PC-9 (cell line): ENCODE measurements at regions of chr1 and their contacts with region 1.

Region 1: GRCh38 chr1:40344597-40344996 is 27.5 kb upstream of the COL9A2 start:
- DNase-seq: no peak
- H3K4me3 ChIP-seq: no peak overlapping the region
- H3K27ac ChIP-seq: no peak overlapping the region
- H3K4me1 ChIP-seq: peaks cover 2% of the 10 kb centered on the region; the same call in 1 of the 2 replicates
- H3K27me3 ChIP-seq: no peaks in the 10 kb centered on the region
- CTCF ChIP-seq: no peak

Region 2: GRCh38 chr1:40232444-40232843 is 112.2 kb before region 1 on chr1:
- CTCF ChIA-PET with region 1: interaction called, 10 read pairs
- POLR2A ChIA-PET with region 1: no interaction called
- intact Hi-C with region 1: no loop called
- DNase-seq: no peak
- H3K4me3 ChIP-seq: no peak overlapping the region
- H3K27ac ChIP-seq: no peak overlapping the region
- H3K4me1 ChIP-seq: no peaks in the 10 kb centered on the region
- H3K27me3 ChIP-seq: no peaks in the 10 kb centered on the region
- CTCF ChIP-seq: no peak

Region 3: DNA sequence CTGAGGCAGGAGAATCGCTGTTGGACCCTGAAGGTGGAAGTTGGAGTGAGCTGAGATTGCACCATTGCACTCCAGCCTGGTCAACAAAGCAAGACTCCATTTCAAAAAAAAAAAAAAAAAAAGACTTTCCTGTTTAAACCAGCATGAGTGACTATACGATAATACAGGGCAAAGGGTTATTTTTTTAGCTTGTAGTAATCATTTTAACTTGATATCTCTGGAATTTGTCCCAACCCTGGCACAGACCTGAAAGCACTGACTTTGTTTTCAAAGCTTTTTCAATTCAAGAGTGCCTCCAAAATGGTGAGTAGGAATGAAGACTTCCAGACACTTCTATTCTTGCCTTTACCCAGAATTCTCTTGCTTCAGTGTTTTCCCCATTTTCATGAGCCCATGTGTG is 101.2 kb before region 1 on chr1:
- CTCF ChIA-PET with region 1: no interaction called
- POLR2A ChIA-PET with region 1: no interaction called
- intact Hi-C with region 1: no loop called
- DNase-seq: no peak
- H3K4me3 ChIP-seq: no peak overlapping the region
- H3K27ac ChIP-seq: no peak overlapping the region
- H3K4me1 ChIP-seq: peaks cover 24% of the 10 kb centered on the region
- H3K27me3 ChIP-seq: no peaks in the 10 kb centered on the region
- CTCF ChIP-seq: no peak

Region 4: DNA sequence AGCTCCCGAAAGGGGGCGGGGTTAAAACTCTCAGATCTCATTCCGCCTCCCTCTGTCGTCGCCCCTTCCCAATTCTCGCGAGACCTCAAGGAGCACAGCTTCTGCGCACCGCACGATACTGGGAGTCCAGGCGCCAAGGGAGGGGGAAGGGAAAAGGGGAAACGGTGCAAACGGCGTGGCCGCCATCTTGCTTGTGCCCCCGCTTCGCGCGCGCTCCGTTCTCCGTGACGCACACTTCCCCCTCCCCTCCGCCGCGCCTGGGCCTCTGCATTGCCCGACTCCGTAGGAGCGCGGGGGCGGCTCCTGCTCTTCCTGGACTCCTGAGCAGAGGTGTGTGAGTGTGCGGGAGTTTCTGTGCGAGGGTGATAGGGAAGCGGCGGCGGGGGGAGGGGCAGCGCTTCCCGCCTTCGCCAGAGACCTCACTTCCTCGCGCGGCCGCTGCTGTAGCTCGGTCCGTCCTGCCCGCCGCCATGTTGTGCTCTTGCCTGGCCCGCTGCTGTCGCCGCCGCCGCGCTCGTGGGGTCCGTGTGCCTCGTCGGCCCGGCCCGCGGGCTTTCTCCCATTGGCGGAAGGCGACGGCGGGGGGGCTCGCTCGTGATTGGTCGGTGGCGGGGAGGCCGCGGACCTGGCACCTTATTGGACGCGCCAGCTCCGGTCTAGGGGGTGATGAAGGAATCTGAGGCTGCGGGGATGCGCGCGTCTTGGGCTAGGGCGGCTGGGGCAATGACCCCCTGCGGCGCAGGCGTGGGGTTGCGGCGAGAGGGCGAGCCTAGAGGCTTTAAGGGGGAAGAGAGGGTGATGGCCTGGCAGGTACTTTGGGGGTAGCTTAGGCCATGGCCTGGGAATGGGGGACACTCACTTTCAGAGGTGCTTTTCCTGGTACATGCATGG is 347.2 kb after region 1 on chr1 and contains the start of gene NFYC:
- CTCF ChIA-PET with region 1: no interaction called
- POLR2A ChIA-PET with region 1: no interaction called
- intact Hi-C with region 1: no loop called
- DNase-seq: peak; percentile 96 to 98
- H3K4me3 ChIP-seq: peak within 1 kb of the TSS; percentile 74
- H3K27ac ChIP-seq: peak within 1 kb of the TSS; percentile 95
- H3K4me1 ChIP-seq: peaks cover 22% of the 10 kb centered on the region
- H3K27me3 ChIP-seq: no peaks in the 10 kb centered on the region
- CTCF ChIP-seq: no peak
- total RNA-seq, gene NFYC: 79.4 and 91.1 TPM in 2 replicates